Ascending aorta (tissue), 2 donors: ENCODE measurements at regions of chr1 and their contacts with region 1.

Region 1: GRCh38 chr1:232110281-232111090 is 483.9 kb downstream of the DISC1 start:
- DNase-seq: no peak
- H3K4me3 ChIP-seq: no peak overlapping the region
- H3K27ac ChIP-seq: no peak overlapping the region
- H3K4me1 ChIP-seq: no peaks in the 10 kb centered on the region
- H3K27me3 ChIP-seq: no peaks in the 10 kb centered on the region
- CTCF ChIP-seq: no peak

Region 2: DNA sequence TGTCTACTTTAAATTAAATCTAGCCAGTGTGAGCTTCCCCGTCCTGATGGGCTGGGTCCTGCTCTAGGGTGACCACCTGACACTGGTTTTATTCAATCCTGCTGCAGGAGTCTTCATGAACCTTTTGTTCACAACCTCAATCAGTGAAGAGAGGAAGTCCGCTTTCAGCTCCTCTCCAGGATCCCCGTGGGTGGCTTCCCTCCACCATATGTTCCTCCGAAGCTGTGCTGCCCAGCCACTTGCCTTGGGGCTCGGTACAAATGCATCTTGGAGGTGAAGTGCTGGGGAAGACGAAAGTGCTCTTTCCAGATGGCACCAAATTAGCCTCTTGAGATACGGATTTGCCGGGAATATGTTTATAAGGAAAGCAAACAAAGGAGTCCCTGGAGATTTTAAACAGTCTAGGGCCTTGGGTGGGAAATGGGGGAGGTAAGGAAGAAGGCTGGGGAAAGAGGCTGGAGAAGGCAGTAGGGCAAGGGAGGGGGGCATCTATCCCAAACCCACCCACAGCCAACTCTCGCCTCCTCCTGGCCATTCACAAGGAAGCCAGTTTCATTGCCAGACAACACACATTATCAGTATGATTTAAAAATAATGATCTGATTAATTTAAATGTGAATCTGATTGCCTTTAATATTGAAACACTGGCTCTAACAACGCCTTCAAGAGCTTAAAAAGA is 53.1 kb before region 1 on chr1:
- intact Hi-C with region 1: no loop called
- DNase-seq: no peak
- H3K4me3 ChIP-seq: no peak overlapping the region
- H3K27ac ChIP-seq: no peak overlapping the region
- H3K4me1 ChIP-seq: no peaks in the 10 kb centered on the region
- H3K27me3 ChIP-seq: no peaks in the 10 kb centered on the region
- CTCF ChIP-seq: no peak

Region 3: GRCh38 chr1:232186931-232187330 is 76.4 kb after region 1 on chr1:
- intact Hi-C with region 1: loop called (anchors 10 kb)
- DNase-seq: no peak
- H3K4me3 ChIP-seq: no peak overlapping the region
- H3K27ac ChIP-seq: no peak overlapping the region
- H3K4me1 ChIP-seq: no peaks in the 10 kb centered on the region
- H3K27me3 ChIP-seq: no peaks in the 10 kb centered on the region
- CTCF ChIP-seq: no peak

Region 4: GRCh38 chr1:232328486-232329100 is 218.1 kb after region 1 on chr1:
- intact Hi-C with region 1: no loop called
- DNase-seq: no peak
- H3K4me3 ChIP-seq: no peak overlapping the region
- H3K27ac ChIP-seq: no peak overlapping the region
- H3K4me1 ChIP-seq: no peaks in the 10 kb centered on the region
- H3K27me3 ChIP-seq: no peaks in the 10 kb centered on the region
- CTCF ChIP-seq: no peak